Activated CD4-positive, alpha-beta T cell treated with anti-CD3 and anti-CD28 coated beads, Interleukin-2, amount 10 ng/mL, durations not matched to agents 7 days and 5 days (primary cell): ENCODE measurements at regions of chr11 and their contacts with region 1.

Region 1: DNA sequence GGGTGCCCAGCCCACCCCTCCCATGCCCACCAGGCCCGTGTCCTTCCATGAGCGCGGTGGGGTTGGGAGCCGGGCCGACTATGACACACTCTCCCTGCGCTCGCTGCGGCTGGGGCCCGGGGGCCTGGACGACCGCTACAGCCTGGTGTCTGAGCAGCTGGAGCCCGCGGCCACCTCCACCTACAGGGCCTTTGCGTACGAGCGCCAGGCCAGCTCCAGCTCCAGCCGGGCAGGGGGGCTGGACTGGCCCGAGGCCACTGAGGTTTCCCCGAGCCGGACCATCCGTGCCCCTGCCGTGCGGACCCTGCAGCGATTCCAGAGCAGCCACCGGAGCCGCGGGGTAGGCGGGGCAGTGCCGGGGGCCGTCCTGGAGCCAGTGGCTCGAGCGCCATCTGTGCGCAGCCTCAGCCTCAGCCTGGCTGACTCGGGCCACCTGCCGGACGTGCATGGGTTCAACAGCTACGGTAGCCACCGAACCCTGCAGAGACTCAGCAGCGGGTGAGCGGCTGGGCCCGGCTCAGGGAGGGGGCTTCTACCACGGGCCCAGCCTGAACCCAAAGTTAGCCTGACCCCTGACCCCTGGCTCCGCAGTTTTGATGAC is 3.0 kb downstream of the PKP3 start:
- DNase-seq: peak; percentile 57
- H3K4me3 Mint-ChIP-seq: no peak overlapping the region
- H3K27ac Mint-ChIP-seq: no peak overlapping the region
- H3K4me1 Mint-ChIP-seq: peaks cover 5% of the 10 kb centered on the region
- H3K27me3 Mint-ChIP-seq: peaks cover 8% of the 10 kb centered on the region

Region 2: DNA sequence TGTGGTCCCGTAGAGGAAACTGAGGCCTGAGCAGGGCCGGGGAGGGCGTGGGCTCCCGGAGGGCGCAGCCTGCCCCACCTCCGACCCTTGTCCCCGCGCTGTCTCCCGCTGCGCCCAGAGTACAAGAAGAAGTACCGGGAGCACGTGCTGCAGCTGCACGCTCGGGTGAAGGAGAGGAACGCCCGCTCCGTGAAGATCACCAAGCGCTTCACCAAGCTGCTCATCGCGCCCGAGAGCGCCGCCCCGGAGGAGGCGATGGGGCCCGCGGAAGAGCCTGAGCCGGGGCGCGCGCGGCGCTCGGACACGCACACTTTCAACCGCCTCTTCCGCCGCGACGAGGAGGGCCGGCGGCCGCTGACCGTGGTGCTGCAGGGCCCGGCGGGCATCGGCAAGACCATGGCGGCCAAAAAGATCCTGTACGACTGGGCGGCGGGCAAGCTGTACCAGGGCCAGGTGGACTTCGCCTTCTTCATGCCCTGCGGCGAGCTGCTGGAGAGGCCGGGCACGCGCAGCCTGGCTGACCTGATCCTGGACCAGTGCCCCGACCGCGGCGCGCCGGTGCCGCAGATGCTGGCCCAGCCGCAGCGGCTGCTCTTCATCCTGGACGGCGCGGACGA is 117.0 kb before region 1 on chr11:
- CTCF ChIA-PET with region 1: no interaction called
- POLR2A ChIA-PET with region 1: no interaction called
- DNase-seq: peak; percentile 56
- H3K4me3 Mint-ChIP-seq: peak overlapping the region; percentile 72
- H3K27ac Mint-ChIP-seq: peak overlapping the region; percentile 86
- H3K4me1 Mint-ChIP-seq: peaks cover 54% of the 10 kb centered on the region
- H3K27me3 Mint-ChIP-seq: peaks cover 57% of the 10 kb centered on the region

Region 3: GRCh38 chr11:297586-298405 is 99.3 kb before region 1 on chr11:
- CTCF ChIA-PET with region 1: no interaction called
- POLR2A ChIA-PET with region 1: no interaction called
- DNase-seq: peak; percentile 47
- H3K4me3 Mint-ChIP-seq: no peak overlapping the region
- H3K27ac Mint-ChIP-seq: peak overlapping the region; percentile 74
- H3K4me1 Mint-ChIP-seq: peaks cover 16% of the 10 kb centered on the region
- H3K27me3 Mint-ChIP-seq: peaks cover 1% of the 10 kb centered on the region

Region 4: GRCh38 chr11:406978-407739 is 10.1 kb after region 1 on chr11:
- CTCF ChIA-PET with region 1: interaction called, 17 read pairs
- POLR2A ChIA-PET with region 1: interaction called, 4 read pairs
- DNase-seq: peak; percentile 93
- H3K4me3 Mint-ChIP-seq: no peak overlapping the region
- H3K27ac Mint-ChIP-seq: peak overlapping the region; percentile 57
- H3K4me1 Mint-ChIP-seq: peaks cover 12% of the 10 kb centered on the region
- H3K27me3 Mint-ChIP-seq: no peaks in the 10 kb centered on the region

Region 5: DNA sequence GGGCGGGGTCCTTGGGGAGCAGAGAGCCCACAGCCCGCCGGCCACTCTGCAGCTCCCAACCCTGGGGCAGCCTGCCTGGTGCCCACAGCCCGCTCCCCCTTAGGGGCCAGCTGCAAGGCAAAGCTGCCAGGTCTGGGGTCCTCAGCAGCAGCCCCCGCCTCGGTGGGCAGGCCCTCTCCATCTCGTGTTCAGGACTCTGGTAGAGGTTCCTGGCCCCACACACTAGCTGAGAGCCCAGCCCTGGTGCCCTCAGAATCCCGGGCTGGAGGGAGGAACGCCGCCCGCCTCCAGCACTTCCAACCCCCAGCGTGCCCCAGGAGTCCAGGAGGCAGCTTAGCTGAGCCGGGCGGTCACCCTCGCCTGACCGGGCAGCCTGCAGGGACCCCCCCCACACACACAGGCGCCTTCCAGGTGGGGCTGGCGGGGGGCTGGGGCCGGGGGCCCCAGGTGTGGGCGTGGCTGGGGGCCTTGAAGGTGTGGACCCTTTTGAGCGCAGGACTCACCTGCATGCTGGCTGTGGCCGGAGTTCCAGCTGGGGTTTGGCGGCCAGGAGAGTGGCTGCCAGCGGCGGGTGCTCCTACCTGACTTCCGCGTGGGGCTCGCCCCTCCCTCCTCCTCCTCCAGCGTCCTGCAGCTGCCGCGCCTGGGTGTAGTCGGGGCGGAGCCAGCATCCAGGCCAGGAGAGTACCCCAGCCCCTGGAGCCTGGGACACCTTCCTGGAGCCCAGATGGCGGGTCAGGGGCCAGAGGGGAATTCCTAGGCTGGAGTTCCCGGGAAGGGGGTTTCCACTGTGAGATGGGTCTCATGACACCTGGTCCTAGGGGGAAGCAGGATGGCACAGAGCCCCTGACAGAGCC is 44.6 kb after region 1 on chr11 and contains the start of gene ANO9:
- CTCF ChIA-PET with region 1: no interaction called
- POLR2A ChIA-PET with region 1: no interaction called
- DNase-seq: peak; percentile 76
- H3K4me3 Mint-ChIP-seq: peak within 1 kb of the TSS; percentile 73
- H3K27ac Mint-ChIP-seq: peak within 1 kb of the TSS; percentile 80
- H3K4me1 Mint-ChIP-seq: peaks cover 36% of the 10 kb centered on the region
- H3K27me3 Mint-ChIP-seq: peaks cover 8% of the 10 kb centered on the region
- total RNA-seq, gene ANO9: 88.2 to 94.2 TPM